ENCODE measurements at regions of chr19 and their contacts with region 1.

Region 1: DNA sequence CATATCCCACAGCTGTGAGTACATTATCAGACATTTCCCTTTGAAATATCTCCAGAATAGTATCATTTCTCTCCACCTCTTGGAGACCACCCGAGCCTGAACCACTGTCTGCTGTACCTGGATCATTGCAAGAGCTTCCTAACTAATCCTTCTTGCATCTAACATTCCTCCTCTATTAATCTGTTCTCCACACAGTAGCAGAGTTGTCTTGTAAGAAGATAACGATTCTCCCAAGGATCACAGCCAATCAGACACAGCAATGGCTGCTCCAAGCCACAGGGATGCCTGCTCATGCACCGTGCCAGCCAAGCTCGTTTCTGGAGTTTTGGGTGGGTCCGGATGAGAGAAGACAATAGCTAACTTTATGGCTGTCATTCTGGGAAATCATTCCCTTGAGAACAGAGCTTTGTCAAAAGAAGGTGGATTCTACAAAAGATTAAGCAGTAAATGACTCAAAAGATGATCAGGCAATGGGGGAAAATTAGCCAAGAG is 14.5 kb upstream of the LAIR1 start:
- DNase-seq: no peak
- H3K4me3 ChIP-seq: no peak overlapping the region
- H3K4me3 Mint-ChIP-seq: peak overlapping the region in 7 of 8 donors; percentile 4 to 71 (median 42)
- H3K27ac ChIP-seq: no peak overlapping the region
- H3K27ac Mint-ChIP-seq: peak overlapping the region in 4 of 7 donors; percentile 29 to 66 (median 42)
- H3K4me1 ChIP-seq: peaks cover 56% of the 10 kb centered on the region
- H3K4me1 Mint-ChIP-seq: peaks cover 42 to 67% (median 59%) of the 10 kb centered on the region in 4 donors
- H3K27me3 ChIP-seq: no peaks in the 10 kb centered on the region
- H3K27me3 Mint-ChIP-seq: no peaks in the 10 kb centered on the region

Region 2: DNA sequence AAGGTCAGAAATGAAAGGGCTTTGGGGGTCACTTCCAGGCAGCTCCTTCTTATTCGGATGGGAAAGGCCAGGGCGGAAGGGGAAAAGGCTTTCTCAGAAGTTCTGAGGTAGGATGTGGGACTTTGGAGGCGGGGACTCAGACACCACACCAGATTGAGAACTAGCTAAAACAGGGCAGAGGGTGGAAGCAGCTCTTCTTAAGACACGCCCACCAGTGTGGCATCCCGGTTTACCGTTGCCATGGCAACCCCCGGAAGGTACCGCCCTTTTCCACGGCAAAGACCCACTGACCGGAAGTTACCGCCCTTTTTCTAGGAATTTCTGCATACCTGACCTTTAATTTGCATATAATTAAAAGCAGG is 62.5 kb before region 1 on chr19:
- CTCF ChIA-PET with region 1: no interaction called
- POLR2A ChIA-PET with region 1: no interaction called
- intact Hi-C with region 1: no loop called
- DNase-seq: no peak
- H3K4me3 ChIP-seq: no peak overlapping the region
- H3K4me3 Mint-ChIP-seq: no peak overlapping the region
- H3K27ac ChIP-seq: no peak overlapping the region
- H3K27ac Mint-ChIP-seq: no peak overlapping the region
- H3K4me1 ChIP-seq: no peaks in the 10 kb centered on the region
- H3K4me1 Mint-ChIP-seq: no peaks in the 10 kb centered on the region
- H3K27me3 ChIP-seq: peaks cover 5% of the 10 kb centered on the region
- H3K27me3 Mint-ChIP-seq: peaks cover 22 to 29% of the 10 kb centered on the region in 2 donors

Region 3: GRCh38 chr19:54364775-54365257 is 14.4 kb before region 1 on chr19 and contains the start of gene LAIR1:
- CTCF ChIA-PET with region 1: no interaction called
- POLR2A ChIA-PET with region 1: interaction called, 19 read pairs
- intact Hi-C with region 1: loop called (anchors 1 kb)
- DNase-seq: peak in 4 of 5 donors; percentile 38 to 55 (median 39)
- H3K4me3 ChIP-seq: peak within 1 kb of the TSS; percentile 36 to 55
- H3K4me3 Mint-ChIP-seq: peak within 1 kb of the TSS; percentile 83 to 91 (median 89)
- H3K27ac ChIP-seq: peak within 1 kb of the TSS; percentile 42
- H3K27ac Mint-ChIP-seq: peak within 1 kb of the TSS; percentile 86 to 94 (median 91)
- H3K4me1 ChIP-seq: peaks cover 76% of the 10 kb centered on the region
- H3K4me1 Mint-ChIP-seq: peaks cover 48 to 87% (median 69%) of the 10 kb centered on the region in 4 donors
- H3K27me3 ChIP-seq: no peaks in the 10 kb centered on the region
- H3K27me3 Mint-ChIP-seq: no peaks in the 10 kb centered on the region
- total RNA-seq, gene LAIR1: 57.6 to 59.8 TPM

Region 4: DNA sequence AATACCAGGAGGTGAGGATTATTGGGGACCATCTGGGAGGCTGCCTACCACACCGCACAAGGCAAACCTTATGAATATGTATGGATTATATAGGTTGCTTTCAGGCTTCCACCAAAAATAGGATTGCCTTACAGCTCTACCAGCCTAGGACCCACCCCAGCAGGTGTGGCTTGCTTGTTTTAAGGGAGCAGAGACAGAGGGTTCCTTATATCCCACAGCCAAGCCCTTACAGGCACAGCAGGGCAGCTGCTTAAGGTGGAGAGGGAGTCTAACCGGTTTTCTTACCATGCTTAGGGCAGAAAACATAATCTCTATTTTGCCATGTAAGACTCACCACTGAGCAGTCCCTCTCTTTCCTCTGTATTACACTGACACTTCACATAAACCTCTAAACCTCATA is 20.0 kb after region 1 on chr19:
- CTCF ChIA-PET with region 1: no interaction called
- POLR2A ChIA-PET with region 1: no interaction called
- intact Hi-C with region 1: no loop called
- DNase-seq: no peak
- H3K4me3 ChIP-seq: no peak overlapping the region
- H3K4me3 Mint-ChIP-seq: no peak overlapping the region
- H3K27ac ChIP-seq: no peak overlapping the region
- H3K27ac Mint-ChIP-seq: no peak overlapping the region
- H3K4me1 ChIP-seq: no peaks in the 10 kb centered on the region
- H3K4me1 Mint-ChIP-seq: no peaks in the 10 kb centered on the region
- H3K27me3 ChIP-seq: no peaks in the 10 kb centered on the region
- H3K27me3 Mint-ChIP-seq: peaks cover 6 to 12% of the 10 kb centered on the region in 2 donors

Measured in CD4-positive, alpha-beta memory T cell (primary cell).